ENCODE measurements at regions of chr17 and their contacts with region 1.

Region 1: DNA sequence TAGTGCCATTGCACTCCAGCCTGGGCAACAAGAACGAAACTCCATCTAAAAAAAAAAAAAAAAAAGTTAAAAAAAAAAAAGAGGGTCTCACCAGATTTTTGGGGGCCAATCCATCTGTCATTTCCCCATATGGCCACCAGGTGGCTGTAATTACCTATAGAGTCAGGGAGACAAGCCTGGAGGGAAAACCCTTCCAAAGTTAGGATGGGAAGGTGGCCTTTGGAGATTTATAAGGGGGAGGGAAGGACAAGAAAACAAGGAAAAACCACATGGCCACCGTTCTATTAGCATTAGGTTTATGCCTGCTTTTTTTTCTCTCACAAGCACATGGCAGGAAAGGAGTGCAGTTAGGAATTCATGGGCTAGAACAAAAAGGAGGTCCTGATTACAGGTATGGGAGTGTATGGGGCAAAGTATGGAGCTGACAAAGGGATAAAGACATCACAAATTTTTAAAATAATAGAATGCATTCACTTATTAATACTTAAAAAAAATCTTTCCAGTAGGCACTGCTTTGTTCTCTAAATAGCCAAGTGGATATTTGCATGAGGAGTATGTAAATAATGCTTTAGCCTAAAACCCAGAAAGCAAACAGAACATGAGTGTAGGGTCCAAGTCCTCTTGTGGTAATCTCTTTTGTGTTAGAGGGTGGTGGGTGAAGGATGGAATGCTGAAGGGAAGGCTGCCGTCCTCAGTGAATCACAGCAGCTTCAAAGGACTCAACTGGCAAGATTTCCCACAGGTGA is 5.1 kb downstream of the CYB5D1 start:
- DNase-seq: peak; percentile 37 to 65 (median 56)
- ATAC-seq: no peak
- H3K4me3 ChIP-seq: no peak overlapping the region
- H3K27ac ChIP-seq: no peak overlapping the region
- H3K4me1 ChIP-seq: peaks cover 15% of the 10 kb centered on the region
- H3K27me3 ChIP-seq: no peaks in the 10 kb centered on the region
- CTCF ChIP-seq: peak; percentile 46 to 96 (median 82)
- POLR2A ChIP-seq: no peak

Region 2: DNA sequence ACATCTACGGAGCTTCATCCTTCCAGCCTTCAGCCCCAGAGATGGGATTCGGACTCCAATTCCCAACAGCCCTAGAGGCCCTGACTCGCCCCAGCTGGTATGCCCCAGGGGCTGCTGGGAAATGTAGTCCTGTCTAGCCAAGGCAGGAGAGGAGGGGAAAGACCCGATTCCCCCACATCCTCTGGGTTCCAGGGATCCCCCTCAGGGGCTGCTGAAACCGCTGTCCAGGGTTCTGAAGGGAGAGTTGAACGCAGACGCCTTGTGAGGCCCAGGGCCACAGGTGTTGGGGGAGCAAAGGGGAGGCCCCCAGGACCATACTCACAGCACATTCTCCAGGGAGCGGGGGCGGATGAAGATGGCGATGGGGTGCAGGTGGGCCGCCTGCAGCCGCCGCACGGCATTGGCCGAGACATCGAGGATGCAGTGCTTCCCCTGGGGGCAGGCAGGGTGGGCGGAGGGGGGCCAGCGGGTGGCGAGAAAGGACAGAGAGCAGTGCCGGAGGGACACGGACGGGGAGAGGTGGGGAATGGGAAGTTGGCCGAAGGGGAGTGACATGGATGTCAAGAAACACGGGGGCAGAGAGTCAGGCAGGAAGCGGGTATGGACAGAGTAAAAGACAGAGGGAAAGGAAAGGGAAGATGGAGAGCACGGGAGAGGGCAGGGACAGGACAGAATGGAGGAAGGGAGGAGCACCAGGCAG is 671.1 kb before region 1 on chr17:
- intact Hi-C with region 1: no loop called
- DNase-seq: peak; percentile 41 to 47 (median 46)
- ATAC-seq: peak; percentile 63
- H3K4me3 ChIP-seq: no peak overlapping the region
- H3K27ac ChIP-seq: no peak overlapping the region
- H3K4me1 ChIP-seq: no peaks in the 10 kb centered on the region
- H3K27me3 ChIP-seq: no peaks in the 10 kb centered on the region
- CTCF ChIP-seq: no peak
- POLR2A ChIP-seq: no peak

Region 3: GRCh38 chr17:7897773-7898172 is 34.9 kb after region 1 on chr17:
- intact Hi-C with region 1: loop called (anchors 5 kb)
- DNase-seq: peak in 3 of 4 donors; percentile 30 to 59 (median 55)
- ATAC-seq: peak; percentile 77
- H3K4me3 ChIP-seq: no peak overlapping the region
- H3K27ac ChIP-seq: no peak overlapping the region
- H3K4me1 ChIP-seq: no peaks in the 10 kb centered on the region
- H3K27me3 ChIP-seq: no peaks in the 10 kb centered on the region
- CTCF ChIP-seq: peak; percentile 25 to 90 (median 73)
- POLR2A ChIP-seq: no peak

Region 4: DNA sequence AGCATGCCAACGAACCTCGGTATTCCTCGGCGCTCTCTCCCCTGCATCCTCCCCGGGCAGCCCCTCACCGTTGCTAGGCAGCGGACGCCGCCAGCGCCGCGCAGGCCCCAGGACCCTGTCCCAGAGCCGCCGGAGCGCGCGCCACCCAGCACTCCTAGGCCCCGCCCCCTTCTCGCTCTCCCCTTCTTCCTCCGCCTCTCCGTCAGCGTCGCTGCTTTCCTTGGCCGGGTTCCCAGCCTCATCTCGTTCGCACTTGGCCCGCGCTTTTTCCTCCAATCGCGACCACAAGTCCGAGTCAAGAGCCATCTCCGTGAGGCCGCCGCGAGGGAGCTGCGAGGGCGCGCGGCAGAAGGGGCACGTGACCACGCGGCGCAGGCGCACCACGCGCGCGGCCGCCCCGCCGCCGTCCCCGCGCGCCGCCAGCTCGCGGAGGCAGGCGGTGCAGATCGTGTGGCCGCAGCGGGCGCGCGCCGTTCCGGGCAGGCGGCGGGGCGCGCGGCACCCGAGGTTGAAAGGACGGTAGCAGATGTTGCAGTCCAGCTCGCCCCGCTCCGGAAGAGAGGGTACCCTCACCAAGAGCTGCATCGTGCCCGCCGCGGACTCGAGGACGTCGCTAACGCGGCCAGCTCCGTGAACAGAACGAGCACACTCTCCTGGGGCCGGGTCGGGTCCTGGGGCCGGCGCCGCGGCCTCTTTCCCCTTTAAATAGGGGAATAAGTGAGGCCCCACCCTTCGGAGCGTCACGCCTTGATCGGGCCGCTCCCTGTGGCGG is 52.9 kb after region 1 on chr17 and contains the start of gene RNF227:
- intact Hi-C with region 1: no loop called
- DNase-seq: peak; percentile 88 to 93 (median 90)
- ATAC-seq: peak; percentile 88
- H3K4me3 ChIP-seq: peak within 1 kb of the TSS; percentile 19 to 25
- H3K27ac ChIP-seq: peak within 1 kb of the TSS; percentile 76 to 90 (median 83)
- H3K4me1 ChIP-seq: peaks cover 23% of the 10 kb centered on the region
- H3K27me3 ChIP-seq: no peaks in the 10 kb centered on the region
- CTCF ChIP-seq: peak in 1 of 7 experiments; percentile 19
- POLR2A ChIP-seq: peak in 2 of 3 donors; percentile 55 to 57
- total RNA-seq, gene RNF227: 2.9 to 3.0 TPM